ENCODE measurements at regions of chr22 and their contacts with region 1.

Region 1: GRCh38 chr22:28800308-28801077 is at the start of gene XBP1:
- DNase-seq: peak; percentile 92
- H3K4me3 Mint-ChIP-seq: peak within 1 kb of the TSS; percentile 88
- H3K27ac Mint-ChIP-seq: peak within 1 kb of the TSS; percentile 94
- H3K4me1 Mint-ChIP-seq: peaks cover 46% of the 10 kb centered on the region
- H3K27me3 Mint-ChIP-seq: no peaks in the 10 kb centered on the region
- total RNA-seq, gene XBP1: 263 to 266 TPM

Region 2: GRCh38 chr22:28600546-28601143 is 199.8 kb before region 1 on chr22:
- CTCF ChIA-PET with region 1: interaction called, 12 read pairs
- POLR2A ChIA-PET with region 1: no interaction called
- DNase-seq: no peak
- H3K4me3 Mint-ChIP-seq: no peak overlapping the region
- H3K27ac Mint-ChIP-seq: no peak overlapping the region
- H3K4me1 Mint-ChIP-seq: no peaks in the 10 kb centered on the region
- H3K27me3 Mint-ChIP-seq: peaks cover 35% of the 10 kb centered on the region

Region 3: GRCh38 chr22:28772633-28773460 is 27.6 kb before region 1 on chr22 and contains the start of gene CCDC117:
- CTCF ChIA-PET with region 1: interaction called, 10 read pairs
- POLR2A ChIA-PET with region 1: interaction called, 93 read pairs
- DNase-seq: peak; percentile 95
- H3K4me3 Mint-ChIP-seq: peak within 1 kb of the TSS; percentile 96
- H3K27ac Mint-ChIP-seq: peak within 1 kb of the TSS; percentile 97
- H3K4me1 Mint-ChIP-seq: peaks cover 24% of the 10 kb centered on the region
- H3K27me3 Mint-ChIP-seq: peaks cover 3% of the 10 kb centered on the region
- total RNA-seq, gene CCDC117: 33.6 to 35.2 TPM

Region 4: GRCh38 chr22:28810821-28811491 is 10.5 kb after region 1 on chr22:
- CTCF ChIA-PET with region 1: interaction called, 52 read pairs
- POLR2A ChIA-PET with region 1: interaction called, 360 read pairs
- DNase-seq: peak; percentile 75
- H3K4me3 Mint-ChIP-seq: peak overlapping the region; percentile 77
- H3K27ac Mint-ChIP-seq: peak overlapping the region; percentile 99
- H3K4me1 Mint-ChIP-seq: peaks cover 81% of the 10 kb centered on the region
- H3K27me3 Mint-ChIP-seq: no peaks in the 10 kb centered on the region

Region 5: DNA sequence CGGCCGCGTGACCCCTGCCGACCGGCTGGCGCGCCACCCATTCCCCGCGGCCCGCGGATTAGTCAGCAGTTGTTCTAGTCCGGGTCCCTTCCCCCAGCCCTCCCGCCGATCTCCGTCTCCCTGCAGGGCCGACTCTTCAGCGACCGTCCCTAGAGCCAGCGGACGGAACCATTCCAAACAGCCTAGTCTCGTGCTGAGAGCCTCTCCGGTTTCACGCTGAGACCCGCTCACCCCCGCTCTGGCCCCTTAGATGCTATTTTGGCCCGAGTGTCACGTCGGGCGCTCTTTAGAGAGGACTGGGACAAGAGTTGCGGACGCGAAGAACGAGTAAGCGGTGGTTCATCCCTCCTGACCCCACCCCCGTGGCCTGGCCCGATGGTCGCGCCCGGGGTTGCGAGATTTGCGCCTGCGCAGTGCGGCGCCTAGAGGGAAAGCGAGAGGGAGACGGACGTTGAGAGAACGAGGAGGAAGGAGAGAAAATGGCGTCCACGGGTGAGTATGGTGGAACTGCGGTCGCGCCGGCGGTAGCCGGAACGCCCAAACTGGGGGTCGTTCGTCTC is 467.4 kb after region 1 on chr22 and contains the starts of genes EWSR1 and RHBDD3:
- CTCF ChIA-PET with region 1: no interaction called
- POLR2A ChIA-PET with region 1: interaction called, 10 read pairs
- DNase-seq: peak; percentile 96
- H3K4me3 Mint-ChIP-seq: peak within 1 kb of the TSS; percentile 94
- H3K27ac Mint-ChIP-seq: peak within 1 kb of the TSS; percentile 95
- H3K4me1 Mint-ChIP-seq: peaks cover 43% of the 10 kb centered on the region
- H3K27me3 Mint-ChIP-seq: no peaks in the 10 kb centered on the region
- total RNA-seq, gene EWSR1: 308 to 311 TPM
- total RNA-seq, gene RHBDD3: 27.8 to 28.8 TPM